ENCODE measurements at regions of chr1 and their contacts with region 1.

Region 1: GRCh38 chr1:21680918-21681317 is 11.8 kb upstream of the RAP1GAP start:
- DNase-seq: no peak
- H3K4me3 ChIP-seq: no peak overlapping the region
- H3K27ac ChIP-seq: no peak overlapping the region
- H3K27me3 ChIP-seq: no peaks in the 10 kb centered on the region
- CTCF ChIP-seq: no peak

Region 2: DNA sequence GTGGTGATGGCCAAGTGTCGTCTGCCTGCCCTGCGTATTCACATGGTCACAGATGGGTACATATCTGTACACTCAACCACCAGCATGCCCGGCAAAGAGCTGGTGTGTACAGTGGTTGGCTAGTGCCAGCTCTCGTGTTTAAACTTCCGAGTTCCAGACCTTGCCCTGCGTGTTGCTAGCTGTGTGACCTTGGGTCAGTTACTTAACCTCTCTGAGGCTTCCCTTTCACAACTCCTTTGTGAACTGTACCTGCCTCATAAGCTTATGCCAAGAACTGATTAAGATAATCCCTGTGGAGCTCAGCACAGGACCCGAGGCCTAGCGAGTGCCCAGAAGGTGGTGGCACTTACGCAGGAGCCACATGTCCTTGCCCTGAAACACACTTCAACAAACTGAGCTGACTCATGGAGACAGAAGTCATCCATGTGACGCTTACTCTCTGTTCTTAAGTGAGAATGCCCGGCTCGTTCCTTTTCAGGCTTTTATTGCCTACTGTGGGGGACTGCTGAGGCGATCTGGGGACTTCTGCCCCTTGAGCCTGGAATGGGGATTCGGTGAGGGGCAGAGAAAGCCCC is 116.3 kb before region 1 on chr1:
- in situ Hi-C with region 1: no loop called
- DNase-seq: no peak
- H3K4me3 ChIP-seq: no peak overlapping the region
- H3K27ac ChIP-seq: no peak overlapping the region
- H3K27me3 ChIP-seq: no peaks in the 10 kb centered on the region
- CTCF ChIP-seq: no peak

Region 3: GRCh38 chr1:21963477-21964217 is 282.7 kb after region 1 on chr1:
- in situ Hi-C with region 1: loop called (anchors 25 kb)
- DNase-seq: peak; percentile 55
- H3K4me3 ChIP-seq: no peak overlapping the region
- H3K27ac ChIP-seq: no peak overlapping the region
- H3K27me3 ChIP-seq: no peaks in the 10 kb centered on the region
- CTCF ChIP-seq: peak; percentile 95

Measured in brain microvascular endothelial cell (primary cell).